ENCODE measurements at regions of chr7 and their contacts with region 1.

Region 1: GRCh38 chr7:43454936-43455518 is 127.9 kb upstream of the STK17A start:
- DNase-seq: peak; percentile 50 to 66 (median 64)
- H3K4me3 ChIP-seq: peak overlapping the region in 1 of 7 experiments; percentile 49
- H3K27ac ChIP-seq: no peak overlapping the region
- H3K4me1 ChIP-seq: no peaks in the 10 kb centered on the region
- H3K27me3 ChIP-seq: no peaks in the 10 kb centered on the region

Region 2: DNA sequence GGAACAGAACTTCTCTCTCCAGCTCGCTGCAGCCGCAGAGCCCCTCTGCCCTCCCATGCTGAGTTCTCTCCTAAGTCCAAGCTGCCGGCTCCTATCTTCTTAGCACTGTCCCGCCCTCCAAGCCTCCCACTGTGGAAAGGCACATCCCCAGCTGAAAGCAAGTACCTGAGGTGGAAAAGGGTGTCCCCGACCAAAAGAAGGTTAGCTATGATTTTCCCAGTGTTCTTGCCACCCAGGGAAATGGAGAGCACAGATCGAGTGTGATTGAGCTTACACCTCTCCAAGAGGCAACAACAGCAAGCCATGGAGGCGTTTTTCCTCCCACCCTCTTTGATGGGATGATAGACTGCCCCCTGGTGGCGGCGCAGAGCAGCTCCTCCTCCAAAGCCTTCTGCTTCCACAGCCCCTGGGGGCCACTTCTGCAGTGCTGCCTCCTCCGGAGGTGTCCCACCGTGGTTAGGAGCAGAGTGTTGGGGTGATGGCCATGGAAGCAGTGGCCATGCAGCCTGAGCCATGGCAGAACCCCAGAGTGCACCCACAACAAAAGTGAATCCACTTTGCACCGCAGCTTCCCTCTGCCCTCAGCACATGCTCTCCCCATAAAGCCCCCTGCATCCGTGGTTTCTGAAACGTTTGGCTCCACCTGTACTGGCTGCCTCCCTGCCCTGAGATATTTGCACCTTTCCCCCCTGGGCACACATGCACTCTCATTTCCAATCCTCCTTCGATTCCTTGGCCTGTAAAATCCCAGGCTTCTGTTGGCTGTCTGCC is 15.2 kb before region 1 on chr7:
- CTCF ChIA-PET with region 1: interaction called, 66 read pairs
- POLR2A ChIA-PET with region 1: no interaction called
- DNase-seq: peak; percentile 64 to 78 (median 74)
- H3K4me3 ChIP-seq: no peak overlapping the region
- H3K27ac ChIP-seq: no peak overlapping the region
- H3K4me1 ChIP-seq: no peaks in the 10 kb centered on the region
- H3K27me3 ChIP-seq: peaks cover 0 to 3% (median 0%) of the 10 kb centered on the region in 5 experiments